Common myeloid progenitor, CD34-positive (primary cell): ENCODE measurements at regions of chr5 and their contacts with region 1.

Region 1: DNA sequence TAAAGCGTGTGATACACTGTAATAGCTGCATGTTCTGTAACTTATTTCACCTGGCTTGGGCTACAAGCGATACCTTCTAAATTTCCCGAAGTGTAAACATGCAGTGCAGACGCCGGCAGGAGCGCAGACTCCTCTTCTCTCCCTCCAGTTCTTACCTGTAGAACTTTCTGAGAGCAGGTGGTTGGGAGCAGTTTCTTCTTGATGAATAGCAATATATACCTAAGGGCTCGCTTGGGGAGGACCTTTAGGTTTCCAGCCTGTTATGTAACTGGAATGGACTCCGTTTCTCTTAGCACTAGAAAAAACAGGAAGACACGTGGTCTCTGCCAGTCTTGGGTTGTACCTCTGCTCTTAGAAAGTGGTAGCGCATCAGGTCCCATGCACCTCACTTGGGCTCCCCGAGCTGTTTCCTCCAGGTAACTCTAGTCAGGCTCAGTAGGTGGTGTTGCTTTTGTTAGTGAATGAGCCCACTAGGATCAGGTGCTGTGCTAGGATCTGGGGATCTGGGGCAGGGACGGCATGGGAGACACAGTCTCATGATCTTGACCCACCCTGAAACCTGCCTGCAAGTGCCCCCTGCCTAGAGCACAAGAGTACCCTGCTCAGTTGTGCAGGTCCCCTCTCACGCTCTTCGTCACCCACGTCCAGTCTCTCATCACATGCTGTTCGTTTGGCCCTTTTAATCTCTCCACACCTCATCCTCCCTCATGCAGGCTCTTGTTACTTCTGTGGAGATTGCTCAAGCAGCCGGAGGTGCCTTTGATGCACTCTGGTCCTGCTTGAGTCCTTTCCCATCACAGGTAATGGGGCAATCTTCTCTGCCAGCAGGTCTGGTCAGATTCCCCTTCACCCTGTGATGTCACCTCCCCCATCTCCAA is 2.8 kb downstream of the TENT4A start:
- DNase-seq: peak in 2 of 3 donors; percentile 35 to 43
- H3K4me3 ChIP-seq: peak overlapping the region in 6 of 7 experiments; percentile 56 to 81 (median 76)
- H3K27ac ChIP-seq: no peak overlapping the region
- H3K4me1 ChIP-seq: peaks cover 14 to 59% (median 49%) of the 10 kb centered on the region in 4 experiments
- H3K27me3 ChIP-seq: no peaks in the 10 kb centered on the region

Region 2: GRCh38 chr5:6598351-6598900 is 117.6 kb before region 1 on chr5:
- CTCF ChIA-PET with region 1: no interaction called
- POLR2A ChIA-PET with region 1: no interaction called
- DNase-seq: no peak
- H3K4me3 ChIP-seq: no peak overlapping the region
- H3K27ac ChIP-seq: no peak overlapping the region
- H3K4me1 ChIP-seq: no peaks in the 10 kb centered on the region
- H3K27me3 ChIP-seq: no peaks in the 10 kb centered on the region

Region 3: GRCh38 chr5:6728011-6728794 is 12.2 kb after region 1 on chr5:
- CTCF ChIA-PET with region 1: interaction called, 11 read pairs
- POLR2A ChIA-PET with region 1: no interaction called
- DNase-seq: no peak
- H3K4me3 ChIP-seq: no peak overlapping the region
- H3K27ac ChIP-seq: no peak overlapping the region
- H3K4me1 ChIP-seq: peaks cover 2 to 52% (median 39%) of the 10 kb centered on the region in 4 experiments
- H3K27me3 ChIP-seq: no peaks in the 10 kb centered on the region

Region 4: DNA sequence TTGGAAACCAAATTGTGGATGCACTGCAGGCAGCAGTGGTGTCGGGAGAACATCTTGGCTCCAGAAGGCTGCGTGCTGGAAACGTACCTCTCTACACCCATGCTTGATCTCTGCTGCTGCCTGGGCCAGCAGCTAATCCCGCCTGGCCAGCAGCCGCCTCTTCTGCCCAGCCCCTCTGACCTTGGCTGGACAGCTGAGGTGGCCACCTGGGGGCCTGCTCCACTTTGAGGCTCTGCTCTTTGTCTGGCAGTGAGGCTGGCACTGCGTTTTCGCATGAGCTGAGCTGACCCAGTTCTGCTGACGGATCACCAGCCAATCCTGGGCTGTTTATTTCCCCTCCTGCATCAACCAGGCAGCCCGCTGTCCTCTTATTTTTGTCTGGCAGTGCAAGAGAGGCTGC is 152.2 kb after region 1 on chr5:
- CTCF ChIA-PET with region 1: no interaction called
- POLR2A ChIA-PET with region 1: no interaction called
- DNase-seq: no peak
- H3K4me3 ChIP-seq: no peak overlapping the region
- H3K27ac ChIP-seq: no peak overlapping the region
- H3K4me1 ChIP-seq: no peaks in the 10 kb centered on the region
- H3K27me3 ChIP-seq: no peaks in the 10 kb centered on the region

Region 5: DNA sequence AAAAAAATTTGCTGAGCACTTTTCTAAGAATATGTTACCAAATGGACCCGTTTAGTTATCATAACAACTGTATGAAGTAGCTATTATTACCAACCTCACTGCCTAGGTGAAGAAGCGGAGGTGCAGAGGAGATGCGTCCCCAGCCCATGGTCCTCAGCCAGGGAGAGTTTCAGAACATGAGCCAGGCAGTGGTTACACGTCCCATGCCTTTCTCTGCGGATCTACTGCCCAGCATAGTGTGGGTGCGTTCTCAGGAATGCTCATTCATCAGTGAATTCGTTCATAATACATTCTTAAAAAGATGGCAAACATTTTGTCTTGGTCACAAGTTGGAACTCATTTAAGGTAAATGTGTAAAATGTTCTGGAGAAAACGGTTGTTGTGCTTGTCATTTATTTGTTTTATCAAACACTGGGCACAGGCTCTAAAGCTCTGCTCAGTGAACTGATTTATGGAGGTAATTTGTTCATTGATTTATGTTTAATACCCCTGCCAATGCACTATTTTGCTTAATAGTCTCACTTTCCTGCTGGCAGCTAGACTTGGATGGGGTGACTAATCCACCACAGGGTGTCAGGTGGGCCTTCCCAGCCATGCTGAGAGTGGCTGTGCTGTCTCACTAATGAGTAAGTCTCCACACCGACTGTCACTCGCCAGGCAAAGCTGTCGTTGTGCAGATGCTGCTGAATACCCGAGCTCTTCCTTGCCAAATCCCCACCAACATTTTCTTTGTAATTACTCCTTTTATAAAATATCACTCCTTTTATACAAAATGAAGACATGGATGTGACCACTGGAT is 246.0 kb after region 1 on chr5:
- CTCF ChIA-PET with region 1: no interaction called
- POLR2A ChIA-PET with region 1: no interaction called
- DNase-seq: no peak
- H3K4me3 ChIP-seq: no peak overlapping the region
- H3K27ac ChIP-seq: no peak overlapping the region
- H3K4me1 ChIP-seq: no peaks in the 10 kb centered on the region
- H3K27me3 ChIP-seq: no peaks in the 10 kb centered on the region